Ascending aorta (tissue), 2 donors: ENCODE measurements at regions of chr6 and their contacts with region 1.

Region 1: GRCh38 chr6:7910654-7911344 is at the start of gene TXNDC5:
- DNase-seq: peak in 1 of 2 donors; percentile 85
- H3K4me3 ChIP-seq: peak within 1 kb of the TSS; percentile 99
- H3K27ac ChIP-seq: peak within 1 kb of the TSS; percentile 70 to 76
- H3K4me1 ChIP-seq: peaks cover 3 to 9% of the 10 kb centered on the region in 2 donors
- H3K27me3 ChIP-seq: no peaks in the 10 kb centered on the region
- CTCF ChIP-seq: no peak
- total RNA-seq, gene TXNDC5: 192 TPM

Region 2: GRCh38 chr6:7725849-7726415 is 184.9 kb before region 1 on chr6 and contains the start of gene BMP6:
- intact Hi-C with region 1: loop called (anchors 5 kb)
- DNase-seq: peak; percentile 50 to 86
- H3K4me3 ChIP-seq: peak within 1 kb of the TSS; percentile 54 to 90
- H3K27ac ChIP-seq: no peak within 1 kb of the TSS
- H3K4me1 ChIP-seq: peaks cover 20 to 21% of the 10 kb centered on the region in 2 donors
- H3K27me3 ChIP-seq: peaks cover 11% of the 10 kb centered on the region
- CTCF ChIP-seq: no peak
- total RNA-seq, gene BMP6: 16.0 TPM

Region 3: GRCh38 chr6:8102122-8102958 is 191.5 kb after region 1 on chr6 and contains the start of gene EEF1E1:
- intact Hi-C with region 1: loop called (anchors 5 kb)
- DNase-seq: peak; percentile 84 to 96
- H3K4me3 ChIP-seq: peak within 1 kb of the TSS; percentile 90 to 94
- H3K27ac ChIP-seq: peak within 1 kb of the TSS; percentile 32 to 47
- H3K4me1 ChIP-seq: peaks cover 0 to 9% of the 10 kb centered on the region in 2 donors
- H3K27me3 ChIP-seq: no peaks in the 10 kb centered on the region
- CTCF ChIP-seq: no peak
- total RNA-seq, gene EEF1E1: 15.5 TPM

Region 4: DNA sequence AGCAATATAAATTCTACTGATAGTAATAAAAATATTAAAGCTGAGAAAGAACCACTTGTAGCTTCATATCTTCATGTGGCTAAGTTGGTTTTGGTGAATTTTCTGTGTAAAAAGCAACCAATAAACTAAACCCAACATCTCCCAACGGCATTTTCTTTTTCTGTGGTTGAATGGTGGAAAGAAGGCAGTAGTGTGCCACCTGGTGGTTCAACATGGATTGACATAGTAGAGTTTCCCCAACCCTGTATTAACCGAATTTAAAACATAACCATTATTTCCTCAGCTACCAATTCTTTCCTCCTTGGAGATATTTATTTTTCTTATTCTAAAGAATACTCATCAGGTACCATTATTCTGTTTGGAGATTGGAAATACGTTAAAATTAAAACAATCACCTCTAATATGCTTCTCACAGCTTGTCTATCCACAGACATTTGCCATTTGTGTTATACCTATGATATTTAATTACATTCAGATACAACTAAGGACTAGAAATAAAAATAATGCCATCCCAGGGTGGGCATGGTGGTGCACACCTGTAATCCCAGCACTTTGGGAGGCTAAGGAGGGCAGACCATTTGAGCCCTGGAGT is 308.6 kb after region 1 on chr6:
- intact Hi-C with region 1: loop called (anchors 5 kb)
- DNase-seq: peak in 1 of 2 donors; percentile 70
- H3K4me3 ChIP-seq: peak overlapping the region in 1 of 2 donors; percentile 18
- H3K27ac ChIP-seq: no peak overlapping the region
- H3K4me1 ChIP-seq: peaks cover 0 to 2% of the 10 kb centered on the region in 2 donors
- H3K27me3 ChIP-seq: no peaks in the 10 kb centered on the region
- CTCF ChIP-seq: peak; percentile 34 to 76 (median 67)

Region 5: DNA sequence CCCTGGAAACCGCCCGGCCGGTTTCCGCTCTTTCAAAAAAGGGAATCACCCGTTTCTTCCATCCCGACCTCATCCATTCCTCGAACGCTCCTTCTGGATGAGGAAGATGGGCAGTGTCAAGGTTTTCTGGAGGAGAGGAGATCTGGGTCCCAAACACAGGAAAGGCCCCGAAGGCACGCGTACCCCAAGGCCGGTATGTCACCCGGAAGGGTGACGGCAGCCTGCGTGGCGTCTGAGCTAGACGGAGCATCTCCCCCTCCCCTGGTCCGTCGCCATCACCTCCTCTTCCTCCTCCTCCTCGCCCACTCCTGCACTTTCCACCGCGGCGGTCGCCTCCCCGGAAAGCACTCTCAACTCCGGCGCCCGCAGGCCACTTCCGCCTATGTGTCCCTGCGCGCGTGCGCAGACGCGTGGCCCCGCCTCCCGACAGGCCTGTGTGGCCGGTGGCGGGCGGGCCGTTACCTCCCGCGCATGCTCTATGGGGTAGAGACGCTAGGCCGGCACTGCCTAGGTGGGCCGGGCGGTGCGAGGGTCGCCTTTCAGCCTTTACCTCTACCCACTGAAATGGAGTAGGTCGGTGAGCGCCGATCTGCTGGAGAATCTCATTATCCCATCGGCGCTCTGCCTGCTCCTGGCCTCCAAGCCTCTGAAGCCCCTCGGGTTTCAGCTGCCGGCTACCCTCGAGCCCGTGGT is 524.5 kb after region 1 on chr6 and contains the start of gene SLC35B3:
- intact Hi-C with region 1: loop called (anchors 5 kb)
- DNase-seq: peak; percentile 75 to 97
- H3K4me3 ChIP-seq: peak within 1 kb of the TSS; percentile 62 to 74
- H3K27ac ChIP-seq: peak within 1 kb of the TSS; percentile 75 to 85
- H3K4me1 ChIP-seq: peaks cover 0 to 17% of the 10 kb centered on the region in 2 donors
- H3K27me3 ChIP-seq: no peaks in the 10 kb centered on the region
- CTCF ChIP-seq: no peak
- total RNA-seq, gene SLC35B3: 11.3 TPM